OCI-LY7 (cell line): ENCODE measurements at regions of chr6 and their contacts with region 1.

Region 1: GRCh38 chr6:47455534-47456209 is 21.9 kb upstream of the CD2AP start:
- DNase-seq: no peak
- H3K4me3 ChIP-seq: no peak overlapping the region
- H3K27ac ChIP-seq: no peak overlapping the region
- H3K4me1 ChIP-seq: peaks cover 30% of the 10 kb centered on the region
- CTCF ChIP-seq: no peak

Region 2: GRCh38 chr6:47376930-47377329 is 78.7 kb before region 1 on chr6:
- CTCF ChIA-PET with region 1: no interaction called
- POLR2A ChIA-PET with region 1: no interaction called
- intact Hi-C with region 1: no loop called
- DNase-seq: no peak
- H3K4me3 ChIP-seq: no peak overlapping the region
- H3K27ac ChIP-seq: no peak overlapping the region
- H3K4me1 ChIP-seq: peaks cover 17% of the 10 kb centered on the region
- CTCF ChIP-seq: no peak

Region 3: GRCh38 chr6:47440719-47441118 is 15.0 kb before region 1 on chr6:
- CTCF ChIA-PET with region 1: interaction called, 4 read pairs
- POLR2A ChIA-PET with region 1: interaction called, 15 read pairs
- intact Hi-C with region 1: no loop called
- DNase-seq: peak; percentile 72
- H3K4me3 ChIP-seq: peak overlapping the region; percentile 34
- H3K27ac ChIP-seq: peak overlapping the region; percentile 33
- H3K4me1 ChIP-seq: peaks cover 55% of the 10 kb centered on the region
- CTCF ChIP-seq: no peak